OCI-LY7 (cell line): ENCODE measurements at regions of chr4 and their contacts with region 1.

Region 1: DNA sequence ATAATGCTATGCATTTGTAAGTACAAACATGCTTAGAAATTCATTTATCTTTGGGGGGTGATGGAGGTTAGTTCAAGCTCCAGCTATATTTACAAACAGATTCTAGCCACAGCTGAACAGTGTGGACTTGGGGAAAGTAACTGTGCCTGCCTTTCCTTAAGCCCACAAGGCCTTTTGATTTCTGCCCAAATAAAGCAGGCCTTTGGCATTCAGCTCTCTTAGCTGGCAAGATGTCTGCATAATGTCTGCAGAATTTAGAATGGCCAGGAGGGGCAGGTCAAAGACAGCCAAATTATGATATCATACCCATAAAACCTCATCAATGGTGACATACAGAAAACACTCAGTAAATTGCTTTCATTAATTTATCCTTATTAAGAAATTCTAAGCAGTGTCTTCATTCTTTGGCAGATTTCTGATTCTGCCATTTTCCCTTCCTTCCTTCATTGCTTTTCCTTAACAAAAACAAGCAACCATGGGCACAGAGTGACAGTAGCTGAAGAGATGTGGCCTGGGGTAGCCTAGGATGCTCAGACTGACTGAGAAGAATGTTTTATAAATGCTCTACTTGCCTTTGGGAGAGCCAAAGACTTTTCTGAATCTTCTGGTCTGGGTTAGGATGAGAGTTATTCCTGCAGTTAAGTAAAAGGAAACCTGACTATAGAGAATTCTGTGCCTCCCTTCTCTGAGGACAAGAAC is 538.7 kb upstream of the NR3C2 start:
- DNase-seq: no peak
- H3K4me3 ChIP-seq: no peak overlapping the region
- H3K27ac ChIP-seq: peak overlapping the region; percentile 98
- H3K4me1 ChIP-seq: peaks cover 65% of the 10 kb centered on the region
- CTCF ChIP-seq: no peak

Region 2: GRCh38 chr4:148441986-148442831 is 538.7 kb before region 1 on chr4 and contains the start of gene NR3C2:
- CTCF ChIA-PET with region 1: no interaction called
- POLR2A ChIA-PET with region 1: interaction called, 4 read pairs
- intact Hi-C with region 1: loop called (anchors 5 kb)
- DNase-seq: peak; percentile 98
- H3K4me3 ChIP-seq: peak within 1 kb of the TSS; percentile 82
- H3K27ac ChIP-seq: peak within 1 kb of the TSS; percentile 17
- H3K4me1 ChIP-seq: peaks cover 14% of the 10 kb centered on the region
- CTCF ChIP-seq: no peak
- total RNA-seq, gene NR3C2: 2.7 and 5.2 TPM in 2 replicates

Region 3: DNA sequence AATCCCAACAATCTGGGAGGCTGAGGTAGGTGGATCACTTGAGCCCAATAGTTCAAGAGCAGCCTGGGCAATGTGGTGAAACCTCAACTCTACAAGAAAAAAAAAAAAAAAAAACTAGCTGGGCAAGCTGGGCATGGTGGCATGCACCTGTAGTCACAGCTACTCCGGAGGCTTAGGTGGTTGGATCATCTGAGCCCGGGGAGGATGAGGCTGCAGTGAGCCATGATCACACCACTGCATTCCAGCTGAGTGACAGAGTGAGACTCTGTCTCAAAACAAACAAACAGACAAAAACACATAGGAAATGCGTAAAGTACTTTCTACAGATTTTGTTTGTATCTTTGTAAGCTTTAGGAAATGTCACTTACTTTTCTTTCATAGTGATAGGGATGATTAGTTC is 231.5 kb before region 1 on chr4:
- CTCF ChIA-PET with region 1: no interaction called
- POLR2A ChIA-PET with region 1: no interaction called
- intact Hi-C with region 1: no loop called
- DNase-seq: no peak
- H3K4me3 ChIP-seq: no peak overlapping the region
- H3K27ac ChIP-seq: no peak overlapping the region
- H3K4me1 ChIP-seq: no peaks in the 10 kb centered on the region
- CTCF ChIP-seq: no peak